ENCODE measurements at regions of chr17 and their contacts with region 1.

Region 1: GRCh38 chr17:8300627-8301242 is 5.5 kb upstream of the SLC25A35 start:
- DNase-seq: peak; percentile 45 to 89 (median 68)
- ATAC-seq: peak; percentile 97
- H3K4me3 ChIP-seq: no peak overlapping the region
- H3K27ac ChIP-seq: no peak overlapping the region
- H3K4me1 ChIP-seq: peaks cover 0 to 11% of the 10 kb centered on the region in 2 donors
- H3K27me3 ChIP-seq: no peaks in the 10 kb centered on the region
- CTCF ChIP-seq: peak; percentile 77 to 86

Region 2: GRCh38 chr17:8091033-8091687 is 209.6 kb before region 1 on chr17:
- intact Hi-C with region 1: loop called in 1 of 2 experiments (anchors 10 kb)
- DNase-seq: no peak
- ATAC-seq: no peak
- H3K4me3 ChIP-seq: no peak overlapping the region
- H3K27ac ChIP-seq: no peak overlapping the region
- H3K4me1 ChIP-seq: no peaks in the 10 kb centered on the region
- H3K27me3 ChIP-seq: peaks cover 0 to 73% of the 10 kb centered on the region in 2 donors
- CTCF ChIP-seq: no peak

Region 3: DNA sequence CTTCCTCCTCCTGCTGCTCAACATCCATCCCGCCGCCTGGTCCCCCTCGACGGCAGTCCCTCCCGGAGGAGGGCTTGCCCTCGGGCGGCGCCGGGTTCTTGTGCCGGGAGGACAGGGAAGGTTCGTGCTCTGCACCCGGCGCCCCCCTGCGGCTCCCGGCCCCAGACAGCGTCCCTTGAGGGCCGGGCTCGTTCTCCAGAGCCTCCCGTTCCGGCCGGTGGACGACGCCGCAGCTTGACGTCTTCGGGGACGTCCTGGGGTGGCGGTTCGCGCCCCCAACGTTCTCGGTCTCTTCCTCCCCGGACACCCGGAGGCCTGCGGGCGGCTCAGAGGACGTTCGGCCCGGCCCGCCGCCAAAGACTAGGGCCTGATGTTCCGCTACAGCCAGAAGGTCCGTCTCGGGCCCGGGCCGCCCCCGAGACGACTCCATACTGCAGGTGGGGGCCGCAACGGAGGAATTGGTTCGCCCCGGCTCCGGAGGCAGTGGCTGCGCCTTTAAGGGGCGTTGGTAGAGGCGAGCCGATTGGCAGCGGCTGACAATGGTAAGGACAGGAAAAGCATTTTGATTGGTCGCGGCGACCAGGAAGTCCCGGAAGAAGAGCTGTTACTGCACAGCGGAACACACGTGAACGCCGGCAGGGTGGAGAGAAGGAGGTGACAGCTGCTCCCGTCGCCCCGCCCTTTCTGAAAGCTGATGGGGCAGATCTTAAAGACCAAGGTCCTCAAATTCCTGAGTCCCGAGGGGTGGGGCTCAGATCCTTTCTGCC is 110.8 kb before region 1 on chr17 and contains the start of gene BORCS6:
- intact Hi-C with region 1: no loop called
- DNase-seq: peak; percentile 92 to 99 (median 98)
- ATAC-seq: peak; percentile 75
- H3K4me3 ChIP-seq: peak within 1 kb of the TSS; percentile 83 to 84
- H3K27ac ChIP-seq: peak within 1 kb of the TSS; percentile 97
- H3K4me1 ChIP-seq: peaks cover 14 to 65% of the 10 kb centered on the region in 2 donors
- H3K27me3 ChIP-seq: no peaks in the 10 kb centered on the region
- CTCF ChIP-seq: peak in 1 of 2 donors; percentile 5
- polyA plus RNA-seq, gene BORCS6: 2.4 to 4.1 (median 3.2) TPM

Measured in left lung (tissue), 14 donors.